ENCODE measurements at regions of chr10 and their contacts with region 1.

Region 1: DNA sequence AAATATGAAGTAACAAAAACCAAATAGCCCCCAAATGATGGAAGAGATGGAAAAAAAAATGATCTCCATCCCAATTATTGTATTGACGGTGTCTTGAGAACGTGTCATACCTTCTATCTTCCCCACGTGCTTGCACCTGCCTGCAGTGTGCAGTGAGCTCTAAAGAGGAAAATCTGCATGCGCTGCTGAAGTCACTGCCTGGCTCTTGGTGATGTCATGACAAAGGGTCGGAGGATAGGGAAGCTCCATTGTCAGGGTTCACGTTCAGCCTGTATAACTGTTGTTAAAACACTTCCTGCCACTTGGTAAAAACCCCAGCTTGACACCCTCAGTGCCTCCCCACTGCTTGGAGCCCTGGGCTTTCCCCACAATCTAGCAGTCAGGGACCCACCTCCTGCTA is 549.2 kb upstream of the MKI67 start:
- DNase-seq: no peak
- ATAC-seq: no peak
- H3K4me3 ChIP-seq: no peak overlapping the region
- H3K4me3 Mint-ChIP-seq: no peak overlapping the region
- H3K27ac ChIP-seq: no peak overlapping the region
- H3K27ac Mint-ChIP-seq: no peak overlapping the region
- H3K4me1 ChIP-seq: no peaks in the 10 kb centered on the region
- H3K4me1 Mint-ChIP-seq: no peaks in the 10 kb centered on the region
- H3K27me3 ChIP-seq: no peaks in the 10 kb centered on the region
- H3K27me3 Mint-ChIP-seq: peaks cover 9 to 15% of the 10 kb centered on the region in 2 donors
- CTCF ChIP-seq: no peak

Region 2: DNA sequence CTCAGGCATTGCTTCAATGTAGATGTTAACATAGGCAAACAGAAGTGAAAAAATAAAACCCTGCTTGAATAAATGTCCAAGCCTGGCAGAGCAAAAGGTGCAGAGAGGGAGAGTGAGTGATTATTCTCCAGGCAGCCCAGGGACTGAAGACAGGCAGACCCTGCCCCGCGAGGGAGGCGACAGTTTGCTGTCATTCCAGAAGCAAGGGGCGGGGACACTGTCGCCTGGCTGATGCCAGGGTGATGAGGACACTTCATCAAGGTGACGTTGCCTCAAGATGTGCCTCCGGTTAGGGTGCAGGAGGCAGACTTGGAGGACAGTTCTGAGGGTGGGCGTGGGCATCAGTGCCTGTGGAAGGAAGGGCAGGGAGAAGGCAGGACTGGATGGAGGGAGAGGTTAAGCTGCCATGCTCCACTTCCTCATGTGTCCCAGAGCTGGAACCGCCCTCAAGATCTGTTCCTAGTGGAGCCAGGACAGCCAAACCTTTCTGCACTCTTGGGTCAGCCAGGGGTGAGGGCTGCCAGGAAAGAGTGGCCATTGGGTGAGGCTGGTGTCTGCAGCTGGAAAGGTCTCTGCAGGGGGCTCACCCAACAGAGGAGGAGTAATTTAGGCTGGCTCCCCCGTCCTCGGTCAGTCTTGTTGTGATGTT is 11.3 kb after region 1 on chr10:
- intact Hi-C with region 1: loop called (anchors 2 kb)
- DNase-seq: no peak
- ATAC-seq: no peak
- H3K4me3 ChIP-seq: no peak overlapping the region
- H3K4me3 Mint-ChIP-seq: no peak overlapping the region
- H3K27ac ChIP-seq: no peak overlapping the region
- H3K27ac Mint-ChIP-seq: no peak overlapping the region
- H3K4me1 ChIP-seq: no peaks in the 10 kb centered on the region
- H3K4me1 Mint-ChIP-seq: no peaks in the 10 kb centered on the region
- H3K27me3 ChIP-seq: no peaks in the 10 kb centered on the region
- H3K27me3 Mint-ChIP-seq: peaks cover 0 to 8% of the 10 kb centered on the region in 2 donors
- CTCF ChIP-seq: no peak